Activated T-helper 1 cell treated with anti-CD3 and anti-CD28 coated beads, Interleukin-12 subunit alpha, Interleukin-12 subunit beta, Interleukin-2, Interleukin-4 antibody, amounts not matched to agents 30 ng/mL and 10 ng/mL and 1 ng/mL, durations not matched to agents 14 hours and 24 hours and 36 hours (primary cell): ENCODE measurements at regions of chr7 and their contacts with region 1.

Region 1: GRCh38 chr7:81846398-81846797 is 76.6 kb upstream of the HGF start:
- DNase-seq: no peak
- H3K4me3 Mint-ChIP-seq: no peak overlapping the region
- H3K27ac Mint-ChIP-seq: no peak overlapping the region
- H3K4me1 Mint-ChIP-seq: peaks cover 7% of the 10 kb centered on the region
- H3K27me3 Mint-ChIP-seq: no peaks in the 10 kb centered on the region

Region 2: DNA sequence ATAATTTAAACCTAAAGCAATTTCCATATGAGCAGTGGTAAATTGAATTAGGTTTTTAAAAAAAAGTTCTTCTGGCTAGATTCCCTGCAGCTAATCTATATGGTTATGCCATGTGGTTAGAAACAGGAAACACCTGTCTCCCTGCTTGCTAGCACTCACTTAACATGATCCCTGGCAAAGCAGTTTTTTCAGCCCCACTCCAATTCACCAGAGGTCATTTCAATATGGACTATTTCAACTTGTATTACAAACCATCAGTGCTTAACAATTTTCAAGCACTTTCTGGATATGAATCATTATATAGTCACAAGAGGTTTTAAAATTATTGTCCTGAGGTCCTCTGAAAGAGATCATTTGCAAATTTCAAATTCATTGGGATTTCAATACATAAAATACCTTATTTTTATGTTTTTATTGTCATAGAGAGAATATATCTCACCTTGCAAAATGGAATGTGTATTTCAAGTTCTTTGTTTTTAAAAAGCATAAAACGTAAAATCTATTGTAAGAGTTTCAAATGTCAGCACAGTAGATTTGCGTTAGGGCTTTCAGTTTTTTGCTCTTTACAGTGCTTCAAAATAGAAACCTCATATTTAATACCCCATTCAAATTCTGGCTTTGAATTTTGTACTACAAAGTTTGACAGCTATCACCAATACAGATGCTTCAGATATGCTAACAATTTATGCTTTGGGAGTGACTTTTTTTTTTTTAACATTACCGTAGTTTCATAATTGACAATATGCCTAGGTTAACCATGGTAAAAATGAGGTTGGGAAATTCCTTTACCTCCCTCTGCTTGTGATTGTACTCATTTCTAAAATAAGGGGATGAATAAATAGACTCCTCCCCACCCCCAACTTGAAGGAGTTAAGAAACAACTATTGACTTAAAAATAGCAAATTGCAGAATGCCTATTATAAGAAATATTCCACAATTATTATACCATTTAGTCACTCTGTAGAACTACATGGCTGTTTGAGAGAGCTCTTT is 41.0 kb after region 1 on chr7:
- intact Hi-C with region 1: loop called (anchors 5 kb)
- DNase-seq: no peak
- H3K4me3 Mint-ChIP-seq: no peak overlapping the region
- H3K27ac Mint-ChIP-seq: no peak overlapping the region
- H3K4me1 Mint-ChIP-seq: peaks cover 14% of the 10 kb centered on the region
- H3K27me3 Mint-ChIP-seq: peaks cover 2% of the 10 kb centered on the region